Naive thymus-derived CD4-positive, alpha-beta T cell (primary cell): ENCODE measurements at regions of chr16 and their contacts with region 1.

Region 1: DNA sequence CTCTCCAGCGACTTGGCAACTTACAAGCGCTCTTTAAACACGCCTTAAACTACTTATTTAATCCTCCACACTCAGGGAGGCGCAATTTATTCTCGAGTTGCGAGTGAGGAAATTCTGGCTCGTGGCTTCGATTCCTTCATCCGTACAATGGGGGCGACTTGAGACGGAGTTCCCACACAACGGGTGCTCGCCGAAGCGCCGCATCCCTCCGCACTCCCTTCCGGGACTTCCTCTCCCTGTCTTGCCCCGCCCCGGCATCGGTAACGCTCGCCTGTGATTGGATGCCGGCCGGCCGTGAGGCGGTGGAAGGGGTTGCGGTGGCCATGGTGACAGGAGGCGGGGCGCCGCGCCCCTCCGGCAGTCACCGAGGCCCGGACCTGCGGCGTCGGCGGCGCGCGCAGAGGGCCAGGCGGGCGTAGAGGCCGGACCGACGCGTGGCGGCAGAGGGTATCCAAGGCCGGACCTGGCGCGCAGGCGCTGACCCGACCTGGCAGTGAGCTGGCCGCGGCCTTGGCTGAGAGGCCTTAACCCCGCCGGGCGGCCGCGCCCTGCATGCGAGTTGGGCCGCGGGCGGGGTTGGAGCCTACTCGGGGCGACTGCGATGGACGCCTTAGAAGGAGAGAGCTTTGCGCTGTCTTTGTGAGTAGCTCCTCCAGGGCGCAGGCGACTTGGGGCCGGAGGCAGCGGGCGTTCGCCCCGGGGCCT is at the start of gene ARL2BP:
- DNase-seq: peak; percentile 90 to 98 (median 96)
- ATAC-seq: peak; percentile 97
- H3K4me3 ChIP-seq: peak within 1 kb of the TSS; percentile 44
- H3K4me3 Mint-ChIP-seq: peak within 1 kb of the TSS; percentile 81 to 97 (median 89)
- H3K27ac ChIP-seq: peak within 1 kb of the TSS; percentile 84
- H3K27ac Mint-ChIP-seq: peak within 1 kb of the TSS; percentile 88 to 97 (median 93)
- H3K4me1 ChIP-seq: peaks cover 5 to 6% of the 10 kb centered on the region in 2 donors
- H3K4me1 Mint-ChIP-seq: peaks cover 14 to 25% (median 17%) of the 10 kb centered on the region in 7 donors
- H3K27me3 ChIP-seq: no peaks in the 10 kb centered on the region
- H3K27me3 Mint-ChIP-seq: no peaks in the 10 kb centered on the region
- total RNA-seq, gene ARL2BP: 32.6 to 57.7 (median 37.9) TPM

Region 2: GRCh38 chr16:56041686-56042085 is 1203.2 kb before region 1 on chr16:
- CTCF ChIA-PET with region 1: no interaction called
- POLR2A ChIA-PET with region 1: no interaction called
- intact Hi-C with region 1: no loop called
- DNase-seq: peak in 1 of 9 donors; percentile 3
- ATAC-seq: peak; percentile 61
- H3K4me3 ChIP-seq: no peak overlapping the region
- H3K4me3 Mint-ChIP-seq: no peak overlapping the region
- H3K27ac ChIP-seq: no peak overlapping the region
- H3K27ac Mint-ChIP-seq: no peak overlapping the region
- H3K4me1 ChIP-seq: no peaks in the 10 kb centered on the region
- H3K4me1 Mint-ChIP-seq: no peaks in the 10 kb centered on the region
- H3K27me3 ChIP-seq: no peaks in the 10 kb centered on the region
- H3K27me3 Mint-ChIP-seq: peaks cover 13 to 45% (median 28%) of the 10 kb centered on the region in 5 donors

Region 3: DNA sequence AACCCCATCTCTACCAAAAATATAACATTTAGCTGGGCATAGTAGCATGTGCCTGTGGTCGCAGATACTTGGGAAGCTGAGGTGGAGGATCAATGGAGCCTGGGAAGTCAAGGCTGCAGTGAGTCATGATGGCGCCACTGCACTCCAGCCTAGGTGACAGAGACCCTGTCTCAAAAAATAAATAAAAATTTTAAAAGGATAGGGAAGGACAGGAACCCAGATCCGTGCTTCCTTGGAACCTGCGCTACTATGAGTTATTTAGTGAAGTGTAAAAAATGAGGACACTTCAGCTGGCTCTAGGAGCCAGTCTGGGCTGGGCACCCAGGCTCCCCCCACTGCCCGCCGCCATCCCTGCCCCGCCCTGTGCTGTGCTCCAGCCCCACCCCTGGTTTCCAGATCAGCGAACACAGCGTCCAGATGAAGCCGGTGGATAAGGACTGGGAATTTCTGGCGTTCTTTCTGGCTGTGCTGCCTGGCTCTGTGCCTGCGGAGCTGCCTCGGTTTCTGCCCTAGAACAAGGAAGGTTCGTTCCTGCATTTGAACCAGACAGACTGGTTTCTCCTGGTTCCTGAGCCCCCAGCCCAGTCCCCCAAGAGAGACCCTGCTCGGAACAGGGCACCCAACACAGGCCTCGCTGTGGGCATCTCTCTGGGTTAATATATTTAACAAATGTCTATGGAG is 21.1 kb after region 1 on chr16:
- CTCF ChIA-PET with region 1: interaction called, 3 read pairs
- POLR2A ChIA-PET with region 1: interaction called, 35 read pairs
- intact Hi-C with region 1: loop called in 1 of 2 experiments (anchors 1 kb)
- DNase-seq: no peak
- ATAC-seq: no peak
- H3K4me3 ChIP-seq: peak overlapping the region; percentile 39
- H3K4me3 Mint-ChIP-seq: peak overlapping the region; percentile 63 to 81 (median 74)
- H3K27ac ChIP-seq: peak overlapping the region; percentile 74
- H3K27ac Mint-ChIP-seq: peak overlapping the region; percentile 36 to 99 (median 97)
- H3K4me1 ChIP-seq: peaks cover 14 to 50% of the 10 kb centered on the region in 2 donors
- H3K4me1 Mint-ChIP-seq: peaks cover 22 to 58% (median 52%) of the 10 kb centered on the region in 7 donors
- H3K27me3 ChIP-seq: no peaks in the 10 kb centered on the region
- H3K27me3 Mint-ChIP-seq: no peaks in the 10 kb centered on the region

Region 4: GRCh38 chr16:57316390-57317017 is 71.6 kb after region 1 on chr16:
- CTCF ChIA-PET with region 1: no interaction called
- POLR2A ChIA-PET with region 1: no interaction called
- intact Hi-C with region 1: no loop called
- DNase-seq: peak in 1 of 9 donors; percentile 3
- ATAC-seq: no peak
- H3K4me3 ChIP-seq: no peak overlapping the region
- H3K4me3 Mint-ChIP-seq: no peak overlapping the region
- H3K27ac ChIP-seq: no peak overlapping the region
- H3K27ac Mint-ChIP-seq: peak overlapping the region in 1 of 9 donors; percentile 56
- H3K4me1 ChIP-seq: peaks cover 0 to 8% of the 10 kb centered on the region in 2 donors
- H3K4me1 Mint-ChIP-seq: peaks cover 15 to 31% (median 18%) of the 10 kb centered on the region in 7 donors
- H3K27me3 ChIP-seq: no peaks in the 10 kb centered on the region
- H3K27me3 Mint-ChIP-seq: peaks cover 0 to 5% (median 0%) of the 10 kb centered on the region in 5 donors

Region 5: DNA sequence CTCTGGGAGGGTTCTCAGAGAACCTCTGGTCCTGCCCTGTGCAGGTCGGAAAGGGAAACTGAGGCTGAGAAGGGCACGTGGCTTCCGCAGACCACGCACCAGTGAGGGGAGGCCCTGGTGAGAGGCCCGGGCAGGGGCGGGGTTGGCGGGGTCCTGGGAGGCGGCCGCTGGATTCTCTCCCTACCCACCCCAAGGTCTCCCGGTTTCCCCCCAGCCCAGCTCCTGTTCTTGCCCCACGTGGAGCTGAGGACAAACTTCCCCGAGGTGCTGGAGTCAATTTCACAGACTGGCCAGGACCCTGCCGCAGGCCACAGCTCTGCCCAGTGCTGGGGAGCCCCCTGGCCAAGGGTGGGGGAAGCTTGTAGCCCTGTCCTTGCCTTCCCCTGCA is 171.2 kb after region 1 on chr16:
- CTCF ChIA-PET with region 1: interaction called, 13 read pairs
- POLR2A ChIA-PET with region 1: interaction called, 3 read pairs
- intact Hi-C with region 1: loop called in 1 of 2 experiments (anchors 1 kb)
- DNase-seq: no peak
- ATAC-seq: no peak
- H3K4me3 ChIP-seq: no peak overlapping the region
- H3K4me3 Mint-ChIP-seq: no peak overlapping the region
- H3K27ac ChIP-seq: no peak overlapping the region
- H3K27ac Mint-ChIP-seq: no peak overlapping the region
- H3K4me1 ChIP-seq: peaks cover 11 to 18% of the 10 kb centered on the region in 2 donors
- H3K4me1 Mint-ChIP-seq: peaks cover 17 to 29% (median 23%) of the 10 kb centered on the region in 7 donors
- H3K27me3 ChIP-seq: no peaks in the 10 kb centered on the region
- H3K27me3 Mint-ChIP-seq: no peaks in the 10 kb centered on the region

Region 6: GRCh38 chr16:57447186-57447962 is 202.5 kb after region 1 on chr16 and contains the starts of genes CIAPIN1 and COQ9:
- CTCF ChIA-PET with region 1: no interaction called
- POLR2A ChIA-PET with region 1: interaction called, 6 read pairs
- intact Hi-C with region 1: loop called in 1 of 2 experiments (anchors 1 kb)
- DNase-seq: peak; percentile 83 to 94 (median 88)
- ATAC-seq: peak; percentile 99
- H3K4me3 ChIP-seq: peak within 1 kb of the TSS; percentile 84
- H3K4me3 Mint-ChIP-seq: peak within 1 kb of the TSS; percentile 90 to 97 (median 92)
- H3K27ac ChIP-seq: peak within 1 kb of the TSS; percentile 87
- H3K27ac Mint-ChIP-seq: peak within 1 kb of the TSS; percentile 75 to 96 (median 90)
- H3K4me1 ChIP-seq: peaks cover 7 to 17% of the 10 kb centered on the region in 2 donors
- H3K4me1 Mint-ChIP-seq: peaks cover 15 to 64% (median 45%) of the 10 kb centered on the region in 7 donors
- H3K27me3 ChIP-seq: no peaks in the 10 kb centered on the region
- H3K27me3 Mint-ChIP-seq: no peaks in the 10 kb centered on the region
- total RNA-seq, gene CIAPIN1: 33.6 to 52.8 (median 35.8) TPM
- total RNA-seq, gene COQ9: 16.4 to 45.4 (median 36.6) TPM

Region 7: GRCh38 chr16:57530104-57530521 is 285.2 kb after region 1 on chr16:
- CTCF ChIA-PET with region 1: no interaction called
- POLR2A ChIA-PET with region 1: no interaction called
- intact Hi-C with region 1: loop called in 1 of 2 experiments (anchors 5 kb)
- DNase-seq: peak in 8 of 9 donors; percentile 56 to 83 (median 68)
- ATAC-seq: peak; percentile 91
- H3K4me3 ChIP-seq: peak overlapping the region; percentile 45
- H3K4me3 Mint-ChIP-seq: peak overlapping the region; percentile 61 to 88 (median 83)
- H3K27ac ChIP-seq: peak overlapping the region; percentile 87
- H3K27ac Mint-ChIP-seq: peak overlapping the region; percentile 85 to 99 (median 96)
- H3K4me1 ChIP-seq: peaks cover 41 to 54% of the 10 kb centered on the region in 2 donors
- H3K4me1 Mint-ChIP-seq: peaks cover 49 to 61% (median 59%) of the 10 kb centered on the region in 7 donors
- H3K27me3 ChIP-seq: no peaks in the 10 kb centered on the region
- H3K27me3 Mint-ChIP-seq: no peaks in the 10 kb centered on the region